PC-9 (cell line): ENCODE measurements at regions of chr6 and their contacts with region 1.

Region 1: GRCh38 chr6:31087494-31088089 is 24.8 kb downstream of the C6orf15 start:
- DNase-seq: peak; percentile 80 to 89
- H3K4me3 ChIP-seq: no peak overlapping the region
- H3K27ac ChIP-seq: 0 out of 2 replicates have a peak overlapping the region, but pooled peaks have one; percentile 2
- H3K4me1 ChIP-seq: peaks cover 12% of the 10 kb centered on the region
- H3K27me3 ChIP-seq: no peaks in the 10 kb centered on the region
- CTCF ChIP-seq: peak; percentile 90

Region 2: GRCh38 chr6:30541515-30542403 is 545.8 kb before region 1 on chr6:
- CTCF ChIA-PET with region 1: interaction called, 6 read pairs
- POLR2A ChIA-PET with region 1: no interaction called
- intact Hi-C with region 1: loop called (anchors 5 kb)
- DNase-seq: peak; percentile 73 to 79
- H3K4me3 ChIP-seq: peak overlapping the region; percentile 49
- H3K27ac ChIP-seq: no peak overlapping the region
- H3K4me1 ChIP-seq: peaks cover 6% of the 10 kb centered on the region; the same call in 1 of the 2 replicates
- H3K27me3 ChIP-seq: no peaks in the 10 kb centered on the region
- CTCF ChIP-seq: peak; percentile 98

Region 3: GRCh38 chr6:30571075-30571768 is 516.4 kb before region 1 on chr6 and contains the start of gene ABCF1:
- CTCF ChIA-PET with region 1: interaction called, 15 read pairs
- POLR2A ChIA-PET with region 1: no interaction called
- intact Hi-C with region 1: no loop called
- DNase-seq: peak; percentile 85 to 99
- H3K4me3 ChIP-seq: peak within 1 kb of the TSS; percentile 80
- H3K27ac ChIP-seq: peak within 1 kb of the TSS; percentile 49
- H3K4me1 ChIP-seq: peaks cover 33% of the 10 kb centered on the region
- H3K27me3 ChIP-seq: no peaks in the 10 kb centered on the region
- CTCF ChIP-seq: no peak
- total RNA-seq, gene ABCF1: 64.0 and 73.7 TPM in 2 replicates

Region 4: GRCh38 chr6:30717042-30717844 is 370.3 kb before region 1 on chr6 and contains the start of gene MDC1:
- CTCF ChIA-PET with region 1: interaction called, 3 read pairs
- POLR2A ChIA-PET with region 1: no interaction called
- intact Hi-C with region 1: loop called (anchors 5 kb)
- DNase-seq: peak; percentile 99 to 100
- H3K4me3 ChIP-seq: peak within 1 kb of the TSS; percentile 85
- H3K27ac ChIP-seq: peak within 1 kb of the TSS; percentile 82
- H3K4me1 ChIP-seq: peaks cover 32% of the 10 kb centered on the region
- H3K27me3 ChIP-seq: no peaks in the 10 kb centered on the region
- CTCF ChIP-seq: no peak
- total RNA-seq, gene MDC1: 72.9 and 81.6 TPM in 2 replicates

Region 5: DNA sequence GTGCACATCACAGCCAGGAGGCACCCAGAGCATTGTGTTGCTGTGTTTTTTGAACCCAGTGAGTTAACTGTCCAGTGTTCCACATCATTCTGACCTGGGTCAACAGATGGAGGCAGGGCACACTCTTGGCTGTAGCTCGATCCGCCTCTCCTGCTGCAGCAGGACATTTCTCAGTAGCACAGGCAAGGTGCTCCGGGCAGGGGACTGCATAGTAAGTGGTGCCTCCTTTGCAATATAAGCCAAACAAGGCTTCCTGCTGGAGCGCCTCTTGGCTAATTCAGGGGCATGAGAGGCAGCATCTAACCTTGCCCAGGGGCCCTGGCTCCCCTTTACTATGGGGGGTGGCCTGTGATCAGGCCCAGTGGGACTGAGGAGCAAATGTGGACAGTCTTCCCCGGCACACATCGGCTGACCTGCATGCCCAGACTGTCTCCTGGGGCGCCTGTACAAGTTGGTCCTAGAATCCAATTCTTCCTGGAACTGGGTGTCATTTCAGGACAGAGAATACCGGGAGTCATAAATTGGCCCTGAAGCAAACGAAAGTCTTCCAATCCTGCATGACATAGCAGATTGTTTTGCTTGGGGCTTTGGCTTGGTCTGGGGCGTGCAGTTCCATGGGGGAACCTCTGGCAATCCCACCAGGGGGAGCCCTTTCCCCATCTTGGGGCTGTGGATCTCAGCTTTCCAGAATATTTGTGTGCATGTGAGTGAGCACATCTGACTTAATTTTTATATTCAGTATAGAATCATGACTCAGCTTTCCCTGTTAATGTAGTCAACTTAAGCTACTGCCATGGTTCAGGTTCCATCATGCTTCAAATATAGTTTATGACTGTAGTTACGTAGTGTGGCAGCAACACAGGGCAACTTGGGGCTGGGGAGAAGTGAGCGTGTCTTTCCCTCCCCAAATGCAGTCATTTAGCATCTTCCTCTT is 259.3 kb before region 1 on chr6:
- CTCF ChIA-PET with region 1: interaction called, 3 read pairs
- POLR2A ChIA-PET with region 1: no interaction called
- intact Hi-C with region 1: loop called (anchors 1 kb)
- DNase-seq: peak; percentile 85 to 95
- H3K4me3 ChIP-seq: no peak overlapping the region
- H3K27ac ChIP-seq: peak overlapping the region; percentile 82
- H3K4me1 ChIP-seq: peaks cover 34% of the 10 kb centered on the region
- H3K27me3 ChIP-seq: no peaks in the 10 kb centered on the region
- CTCF ChIP-seq: peak; percentile 93

Region 6: GRCh38 chr6:31068669-31069340 is 18.8 kb before region 1 on chr6:
- CTCF ChIA-PET with region 1: interaction called, 17 read pairs
- POLR2A ChIA-PET with region 1: no interaction called
- intact Hi-C with region 1: no loop called
- DNase-seq: peak; percentile 61 to 80
- H3K4me3 ChIP-seq: no peak overlapping the region
- H3K27ac ChIP-seq: no peak overlapping the region
- H3K4me1 ChIP-seq: peaks cover 3% of the 10 kb centered on the region; the same call in 1 of the 2 replicates
- H3K27me3 ChIP-seq: no peaks in the 10 kb centered on the region
- CTCF ChIP-seq: peak; percentile 94

Region 7: GRCh38 chr6:31128093-31128676 is 40.6 kb after region 1 on chr6:
- CTCF ChIA-PET with region 1: interaction called, 3 read pairs
- POLR2A ChIA-PET with region 1: no interaction called
- intact Hi-C with region 1: loop called (anchors 1 kb)
- DNase-seq: peak; percentile 45 to 66
- H3K4me3 ChIP-seq: no peak overlapping the region
- H3K27ac ChIP-seq: no peak overlapping the region
- H3K4me1 ChIP-seq: peaks cover 15% of the 10 kb centered on the region
- H3K27me3 ChIP-seq: no peaks in the 10 kb centered on the region
- CTCF ChIP-seq: peak; percentile 85

Region 8: DNA sequence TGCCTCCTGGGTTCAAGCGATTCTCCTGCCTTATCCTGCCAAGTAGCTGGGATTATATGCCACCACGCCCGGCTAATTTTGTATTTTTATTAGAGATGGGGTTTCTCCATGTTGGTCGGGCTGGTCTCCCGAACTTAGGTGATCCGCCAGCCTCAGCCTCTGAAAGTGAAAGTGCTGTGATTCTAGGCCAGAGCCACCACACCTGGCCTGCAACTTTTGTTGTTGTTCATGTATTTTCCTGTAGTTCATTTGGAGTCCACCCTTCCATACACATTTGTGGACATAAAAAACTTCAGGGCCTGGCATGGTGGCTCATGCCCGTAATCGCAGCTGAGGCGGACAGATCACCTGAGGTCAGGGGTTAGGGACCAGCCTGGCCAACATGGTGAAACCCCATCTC is 754.5 kb after region 1 on chr6:
- CTCF ChIA-PET with region 1: no interaction called
- POLR2A ChIA-PET with region 1: no interaction called
- intact Hi-C with region 1: no loop called
- DNase-seq: no peak
- H3K4me3 ChIP-seq: no peak overlapping the region
- H3K27ac ChIP-seq: no peak overlapping the region
- H3K4me1 ChIP-seq: peaks cover 14% of the 10 kb centered on the region
- H3K27me3 ChIP-seq: no peaks in the 10 kb centered on the region
- CTCF ChIP-seq: no peak